H1 (cell line): ENCODE measurements at regions of chr12 and their contacts with region 1.

Region 1: DNA sequence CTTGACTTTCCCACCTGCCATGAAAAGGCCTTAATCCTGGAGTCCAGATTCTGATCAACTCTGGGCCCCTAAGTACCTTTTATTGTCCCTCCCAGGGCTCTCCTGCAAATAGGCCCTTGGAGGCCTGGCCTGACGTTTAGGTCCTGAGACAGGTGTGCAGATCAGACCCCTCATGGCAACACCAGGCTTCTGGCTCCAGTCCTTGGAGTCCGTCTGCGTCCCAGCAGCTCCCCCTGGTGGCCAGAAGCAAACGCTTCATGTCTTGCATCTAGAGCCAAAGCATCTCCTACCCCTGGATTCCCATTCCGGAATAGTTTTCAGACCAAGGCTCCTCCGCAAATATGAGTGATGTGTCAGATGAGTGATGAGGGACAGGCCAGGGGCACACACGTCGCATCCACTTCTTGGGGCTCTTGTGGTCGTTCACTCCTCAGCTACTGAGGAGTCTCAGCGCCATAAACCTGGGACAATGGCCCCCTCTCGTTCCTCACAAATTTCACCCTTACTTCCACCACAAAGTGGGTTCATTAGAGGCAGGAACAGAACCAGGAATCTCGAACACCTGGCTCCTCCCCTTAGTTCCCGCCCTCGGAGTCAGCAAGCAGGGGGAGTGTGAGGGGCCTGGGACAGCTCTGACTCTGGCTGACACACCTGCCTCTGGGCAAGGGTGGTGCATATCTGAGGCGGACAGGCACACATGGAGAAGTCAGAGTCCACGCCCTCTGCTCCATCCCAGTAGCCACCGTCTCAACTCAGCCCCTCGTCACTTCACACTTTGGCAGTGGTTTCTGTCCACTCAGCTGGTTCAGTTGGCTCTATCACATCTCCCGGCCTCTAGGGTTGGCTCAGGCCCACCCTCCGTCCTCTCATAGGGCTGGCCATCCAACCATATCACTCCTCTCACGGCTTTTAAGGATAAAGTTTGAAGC is 77.9 kb upstream of the PWP1 start:
- DNase-seq: peak; percentile 76 to 94
- H3K4me3 ChIP-seq: no peak overlapping the region
- H3K27ac ChIP-seq: no peak overlapping the region
- H3K4me1 ChIP-seq: peaks cover 6 to 16% (median 10%) of the 10 kb centered on the region in 4 experiments
- H3K27me3 ChIP-seq: 0 out of 7 replicates have a peak, but pooled peaks cover 0 to 2% (median 0%) of the 10 kb centered on the region in 4 experiments
- CTCF ChIP-seq: peak; percentile 82 to 98 (median 97)
- EP300 ChIP-seq: no peak
- POLR2A ChIP-seq: no peak
- RAD21 ChIP-seq: peak; percentile 98 to 99

Region 2: DNA sequence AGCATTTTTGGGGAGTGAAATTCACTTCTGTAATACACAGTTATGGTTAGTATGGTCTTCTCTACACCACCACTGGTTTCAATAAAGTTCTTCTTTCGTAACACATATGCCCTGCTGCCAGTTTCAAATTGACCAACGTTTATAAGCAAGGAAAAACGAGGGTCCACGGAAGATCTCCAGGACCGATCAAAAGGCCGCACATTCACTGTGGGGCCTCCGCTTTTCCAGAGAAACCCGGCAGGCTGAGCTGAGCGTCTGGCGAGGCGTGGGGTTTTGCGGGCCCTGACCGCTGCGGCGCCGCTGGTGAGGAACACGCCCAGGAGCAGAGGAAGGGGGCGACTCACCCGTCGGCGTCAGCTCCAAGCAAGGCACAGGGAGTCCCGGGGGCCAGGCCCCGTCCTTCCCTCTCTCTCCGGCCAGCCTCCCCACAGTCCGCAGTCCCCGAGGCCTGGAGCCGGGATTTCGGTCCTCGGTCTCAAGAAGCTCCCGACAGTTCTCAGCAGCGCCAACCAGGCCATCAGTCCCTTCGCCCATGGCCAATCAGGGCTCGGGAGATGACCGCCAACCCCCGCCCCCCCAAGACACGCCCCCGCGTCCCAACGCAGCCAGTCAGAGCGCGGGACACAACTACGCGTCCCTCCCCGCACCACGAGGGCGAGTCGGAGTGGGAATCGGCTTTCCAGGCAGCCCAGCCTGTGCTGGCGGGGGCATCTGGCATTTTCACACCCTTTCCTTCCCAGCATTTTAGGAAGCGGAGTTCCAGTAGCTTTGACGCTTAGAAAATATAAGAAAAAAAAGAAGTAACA is 620.9 kb before region 1 on chr12 and contains the start of gene MTERF2:
- CTCF ChIA-PET with region 1: no interaction called
- POLR2A ChIA-PET with region 1: no interaction called
- DNase-seq: peak; percentile 77 to 85
- H3K4me3 ChIP-seq: peak within 1 kb of the TSS; percentile 74 to 86 (median 86)
- H3K27ac ChIP-seq: peak within 1 kb of the TSS; percentile 33; the same call in 1 of the 2 replicates
- H3K4me1 ChIP-seq: peaks cover 2 to 10% (median 6%) of the 10 kb centered on the region in 4 experiments
- H3K27me3 ChIP-seq: no peaks in the 10 kb centered on the region; a peak in 1 of 7 replicates
- CTCF ChIP-seq: no peak
- EP300 ChIP-seq: no peak
- POLR2A ChIP-seq: peak in 1 of 2 experiments; percentile 73; a peak in 2 of 3 replicates
- RAD21 ChIP-seq: no peak
- total RNA-seq, gene MTERF2: 6.2 and 7.1 TPM in 2 replicates

Region 3: DNA sequence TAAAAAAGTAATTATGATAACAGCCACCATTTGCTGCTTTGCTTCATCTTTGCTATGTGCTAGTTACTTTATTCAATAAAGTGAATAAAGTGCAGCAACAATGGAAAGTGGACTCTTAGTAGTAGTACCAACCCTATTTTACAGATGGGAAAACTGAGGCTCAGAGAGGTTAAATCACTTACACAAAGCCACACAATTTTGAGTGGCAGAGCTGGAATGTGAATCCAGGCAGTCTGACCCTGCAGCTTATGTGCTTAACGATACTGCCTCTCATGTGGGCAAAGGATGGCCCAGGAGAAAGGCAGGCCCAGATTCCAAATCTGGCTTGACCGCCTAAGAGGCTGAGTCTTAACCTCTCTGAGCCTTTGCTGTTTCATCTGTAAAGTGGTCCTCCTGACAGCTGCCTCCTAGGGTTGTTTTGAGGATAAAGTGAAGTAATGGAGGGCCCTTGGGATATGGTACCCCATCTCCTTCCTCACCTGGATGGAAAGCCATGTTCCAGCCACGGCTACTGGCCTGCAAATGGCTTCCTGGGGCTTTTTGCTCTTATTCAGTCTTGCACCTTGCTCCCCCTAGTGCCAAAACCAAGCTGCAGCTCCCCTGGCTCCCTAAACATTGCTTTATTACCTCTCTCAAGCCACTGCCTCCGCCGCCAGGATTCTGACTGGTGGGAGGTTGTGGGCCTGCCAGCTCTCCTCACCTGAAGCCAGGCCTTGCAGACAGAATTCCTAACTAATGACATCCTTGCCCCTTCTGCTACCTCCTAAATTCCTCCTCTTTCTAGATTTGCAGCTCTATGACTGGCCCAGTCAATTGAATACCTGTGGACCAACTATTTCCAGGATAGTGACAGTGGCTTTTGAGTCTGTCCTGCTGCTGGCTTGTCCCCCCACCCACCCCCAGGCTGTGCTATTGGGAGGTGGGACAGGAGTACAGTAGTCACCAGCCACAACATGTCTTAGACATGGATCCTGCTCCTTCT is 205.4 kb before region 1 on chr12:
- CTCF ChIA-PET with region 1: interaction called, 87 read pairs
- POLR2A ChIA-PET with region 1: no interaction called
- DNase-seq: peak; percentile 79 to 81
- H3K4me3 ChIP-seq: no peak overlapping the region; a peak in 1 of 8 replicates
- H3K27ac ChIP-seq: no peak overlapping the region
- H3K4me1 ChIP-seq: peaks cover 1 to 13% (median 8%) of the 10 kb centered on the region in 4 experiments; a peak in 4 of 7 replicates
- H3K27me3 ChIP-seq: no peaks in the 10 kb centered on the region; a peak in 1 of 7 replicates
- CTCF ChIP-seq: peak; percentile 73 to 89 (median 87)
- EP300 ChIP-seq: no peak
- POLR2A ChIP-seq: no peak
- RAD21 ChIP-seq: peak; percentile 80 to 89

Region 4: GRCh38 chr12:107448198-107448597 is 159.5 kb before region 1 on chr12:
- CTCF ChIA-PET with region 1: interaction called, 58 read pairs
- POLR2A ChIA-PET with region 1: no interaction called
- DNase-seq: peak in 1 of 2 experiments; percentile 76
- H3K4me3 ChIP-seq: no peak overlapping the region
- H3K27ac ChIP-seq: no peak overlapping the region
- H3K4me1 ChIP-seq: peaks cover 0 to 7% (median 2%) of the 10 kb centered on the region in 4 experiments; a peak in 1 of 7 replicates
- H3K27me3 ChIP-seq: no peaks in the 10 kb centered on the region
- CTCF ChIP-seq: peak; percentile 40 to 70 (median 70)
- EP300 ChIP-seq: no peak
- POLR2A ChIP-seq: no peak
- RAD21 ChIP-seq: peak; percentile 50 to 64

Region 5: DNA sequence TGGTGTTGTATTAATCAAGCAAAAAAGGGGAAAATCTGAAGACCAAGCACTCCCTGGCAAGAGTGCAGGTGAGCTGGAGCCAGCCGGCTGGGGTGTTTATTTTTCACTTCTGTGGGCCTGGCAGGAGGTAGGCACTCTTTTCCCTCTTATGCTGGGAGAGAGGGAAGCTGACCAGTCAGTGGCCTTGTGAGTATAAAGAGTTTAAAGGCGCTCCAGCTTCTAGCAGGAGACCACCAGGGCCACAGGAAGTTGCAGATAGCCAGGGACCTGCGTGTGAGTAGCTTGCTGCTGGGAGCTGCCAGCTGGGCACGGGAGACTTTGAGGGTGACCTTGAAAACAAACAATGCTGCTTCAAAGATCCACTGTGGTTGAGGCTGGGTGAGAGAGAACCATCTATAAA is 139.5 kb before region 1 on chr12:
- CTCF ChIA-PET with region 1: interaction called, 38 read pairs
- POLR2A ChIA-PET with region 1: no interaction called
- DNase-seq: no peak
- H3K4me3 ChIP-seq: no peak overlapping the region
- H3K27ac ChIP-seq: no peak overlapping the region
- H3K4me1 ChIP-seq: peaks cover 0 to 10% (median 4%) of the 10 kb centered on the region in 4 experiments; a peak in 3 of 7 replicates
- H3K27me3 ChIP-seq: no peaks in the 10 kb centered on the region; a peak in 5 of 7 replicates
- CTCF ChIP-seq: no peak
- EP300 ChIP-seq: no peak
- POLR2A ChIP-seq: no peak
- RAD21 ChIP-seq: no peak

Region 6: DNA sequence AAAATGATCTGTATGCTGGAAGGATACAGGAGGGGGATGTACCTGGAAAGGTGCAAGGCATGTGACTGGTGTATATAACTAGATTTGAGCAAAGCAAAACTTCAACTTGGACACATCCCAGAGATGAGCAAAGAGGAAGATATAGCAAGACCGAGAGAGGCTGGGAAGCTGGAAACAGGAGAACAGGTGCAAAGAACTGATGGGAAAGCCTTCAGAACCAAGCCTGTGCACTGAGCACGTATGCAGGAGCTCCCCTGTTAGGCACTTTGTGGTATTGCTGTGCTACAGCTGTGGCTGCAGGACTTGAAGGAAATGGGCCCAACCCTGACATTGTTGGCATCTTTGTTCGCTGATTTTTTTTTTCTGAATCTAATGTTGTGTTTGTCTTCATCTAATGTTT is 42.8 kb before region 1 on chr12:
- CTCF ChIA-PET with region 1: interaction called, 26 read pairs
- POLR2A ChIA-PET with region 1: no interaction called
- DNase-seq: no peak
- H3K4me3 ChIP-seq: no peak overlapping the region
- H3K27ac ChIP-seq: no peak overlapping the region
- H3K4me1 ChIP-seq: peaks cover 0 to 6% (median 2%) of the 10 kb centered on the region in 4 experiments; a peak in 3 of 7 replicates
- H3K27me3 ChIP-seq: no peaks in the 10 kb centered on the region
- CTCF ChIP-seq: peak; percentile 67 to 89 (median 78)
- EP300 ChIP-seq: no peak
- POLR2A ChIP-seq: no peak
- RAD21 ChIP-seq: peak; percentile 78 to 81

Region 7: GRCh38 chr12:107622005-107622404 is 14.3 kb after region 1 on chr12:
- CTCF ChIA-PET with region 1: interaction called, 117 read pairs
- POLR2A ChIA-PET with region 1: interaction called, 5 read pairs
- DNase-seq: peak in 1 of 2 experiments; percentile 80
- H3K4me3 ChIP-seq: no peak overlapping the region
- H3K27ac ChIP-seq: no peak overlapping the region
- H3K4me1 ChIP-seq: no peaks in the 10 kb centered on the region
- H3K27me3 ChIP-seq: no peaks in the 10 kb centered on the region
- CTCF ChIP-seq: peak; percentile 75 to 85 (median 76)
- EP300 ChIP-seq: no peak
- POLR2A ChIP-seq: no peak
- RAD21 ChIP-seq: peak; percentile 69 to 79